ENCODE measurements at regions of chr1 and their contacts with region 1.

Region 1: GRCh38 chr1:9629445-9630201 is 21.9 kb upstream of the PIK3CD start:
- DNase-seq: peak; percentile 91
- ATAC-seq: peak; percentile 59
- H3K4me3 Mint-ChIP-seq: peak overlapping the region; percentile 98
- H3K27ac Mint-ChIP-seq: peak overlapping the region; percentile 96
- H3K4me1 Mint-ChIP-seq: peaks cover 46% of the 10 kb centered on the region
- H3K27me3 Mint-ChIP-seq: no peaks in the 10 kb centered on the region
- CTCF ChIP-seq: no peak

Region 2: DNA sequence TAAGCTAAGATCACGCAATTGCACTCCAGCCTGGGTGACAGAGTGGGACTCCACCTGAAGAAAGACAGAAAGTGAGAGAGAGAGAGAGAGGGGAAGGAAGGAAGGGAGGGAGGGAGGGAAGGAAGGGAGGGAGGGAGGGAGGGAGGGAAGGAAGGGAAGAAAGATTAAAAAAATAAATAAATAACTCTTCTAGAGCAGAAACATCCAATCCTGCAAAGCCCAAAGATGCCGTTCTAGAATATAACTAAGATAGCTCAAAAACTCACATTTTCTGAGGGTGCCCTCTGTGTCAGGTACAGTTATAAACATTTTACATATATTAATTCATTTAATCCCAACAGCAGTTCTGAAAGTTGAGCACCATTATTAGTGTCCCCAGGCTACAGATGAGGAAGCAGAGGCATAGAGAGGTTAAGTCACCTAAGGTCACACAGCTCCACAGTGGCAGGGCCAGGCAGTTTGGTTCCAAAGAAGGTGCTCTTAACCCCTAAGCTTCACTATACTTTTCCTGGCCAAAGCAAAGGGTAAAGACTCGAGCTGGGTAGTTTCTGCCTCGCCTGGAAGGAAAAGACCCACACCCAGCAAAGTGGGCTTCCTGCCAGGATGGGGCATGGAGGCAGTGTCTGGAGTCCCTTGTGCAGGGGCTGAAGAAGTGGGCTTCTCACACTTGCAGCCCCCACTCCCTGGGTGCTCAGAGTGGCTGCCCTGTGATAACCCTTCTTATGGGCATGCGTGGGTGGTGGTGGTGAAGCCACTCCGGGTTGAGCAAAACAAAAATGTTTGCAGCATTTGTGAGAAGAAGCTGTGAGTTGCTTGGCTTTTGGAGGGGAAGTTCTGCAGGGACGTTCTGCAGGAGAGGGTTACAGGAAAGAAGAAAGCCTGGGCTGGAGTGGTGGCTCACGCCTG is 14.0 kb after region 1 on chr1:
- CTCF ChIA-PET with region 1: interaction called, 27 read pairs
- POLR2A ChIA-PET with region 1: interaction called, 335 read pairs
- intact Hi-C with region 1: no loop called
- DNase-seq: peak; percentile 72
- ATAC-seq: peak; percentile 58
- H3K4me3 Mint-ChIP-seq: peak overlapping the region; percentile 6
- H3K27ac Mint-ChIP-seq: peak overlapping the region; percentile 68
- H3K4me1 Mint-ChIP-seq: peaks cover 66% of the 10 kb centered on the region
- H3K27me3 Mint-ChIP-seq: no peaks in the 10 kb centered on the region
- CTCF ChIP-seq: no peak

Region 3: GRCh38 chr1:9665193-9665592 is 35.6 kb after region 1 on chr1:
- CTCF ChIA-PET with region 1: interaction called, 30 read pairs
- POLR2A ChIA-PET with region 1: interaction called, 335 read pairs
- intact Hi-C with region 1: loop called (anchors 5 kb)
- DNase-seq: no peak
- ATAC-seq: no peak
- H3K4me3 Mint-ChIP-seq: peak overlapping the region; percentile 13
- H3K27ac Mint-ChIP-seq: peak overlapping the region; percentile 74
- H3K4me1 Mint-ChIP-seq: peaks cover 67% of the 10 kb centered on the region
- H3K27me3 Mint-ChIP-seq: no peaks in the 10 kb centered on the region
- CTCF ChIP-seq: no peak

Region 4: GRCh38 chr1:9689011-9689706 is 59.5 kb after region 1 on chr1:
- CTCF ChIA-PET with region 1: interaction called, 51 read pairs
- POLR2A ChIA-PET with region 1: interaction called, 47 read pairs
- intact Hi-C with region 1: loop called (anchors 5 kb)
- DNase-seq: peak; percentile 89
- ATAC-seq: peak; percentile 74
- H3K4me3 Mint-ChIP-seq: peak overlapping the region; percentile 77
- H3K27ac Mint-ChIP-seq: peak overlapping the region; percentile 71
- H3K4me1 Mint-ChIP-seq: peaks cover 70% of the 10 kb centered on the region
- H3K27me3 Mint-ChIP-seq: no peaks in the 10 kb centered on the region
- CTCF ChIP-seq: no peak

Region 5: GRCh38 chr1:9730096-9730901 is 100.7 kb after region 1 on chr1:
- CTCF ChIA-PET with region 1: interaction called, 8 read pairs
- POLR2A ChIA-PET with region 1: interaction called, 12 read pairs
- intact Hi-C with region 1: no loop called
- DNase-seq: peak; percentile 36
- ATAC-seq: no peak
- H3K4me3 Mint-ChIP-seq: peak overlapping the region; percentile 30
- H3K27ac Mint-ChIP-seq: peak overlapping the region; percentile 79
- H3K4me1 Mint-ChIP-seq: peaks cover 55% of the 10 kb centered on the region
- H3K27me3 Mint-ChIP-seq: no peaks in the 10 kb centered on the region
- CTCF ChIP-seq: no peak

Measured in activated CD8-positive, alpha-beta T cell treated with anti-CD3 and anti-CD28 coated beads for 36 hours (primary cell).